G401 (cell line): ENCODE measurements at regions of chr3 and their contacts with region 1.

Region 1: GRCh38 chr3:57094575-57094974 is 34.1 kb downstream of the SPATA12 start:
- DNase-seq: no peak

Region 2: GRCh38 chr3:56997675-56998074 is 96.9 kb before region 1 on chr3:
- in situ Hi-C with region 1: loop called (anchors 10 kb)
- DNase-seq: no peak

Region 3: GRCh38 chr3:57199895-57200297 is 105.3 kb after region 1 on chr3 and contains the start of gene HESX1:
- in situ Hi-C with region 1: no loop called
- DNase-seq: no peak
- total RNA-seq, gene HESX1: 0.43 and 3.6 TPM in 2 replicates